ENCODE measurements at regions of chr13 and their contacts with region 1.

Region 1: GRCh38 chr13:46160471-46161066 is 21.4 kb downstream of the LCP1 start:
- DNase-seq: no peak
- ATAC-seq: peak; percentile 62
- H3K4me3 Mint-ChIP-seq: peak overlapping the region; percentile 58
- H3K27ac Mint-ChIP-seq: peak overlapping the region; percentile 89
- H3K4me1 Mint-ChIP-seq: peaks cover 55% of the 10 kb centered on the region
- H3K27me3 Mint-ChIP-seq: no peaks in the 10 kb centered on the region
- CTCF ChIP-seq: peak; percentile 88

Region 2: DNA sequence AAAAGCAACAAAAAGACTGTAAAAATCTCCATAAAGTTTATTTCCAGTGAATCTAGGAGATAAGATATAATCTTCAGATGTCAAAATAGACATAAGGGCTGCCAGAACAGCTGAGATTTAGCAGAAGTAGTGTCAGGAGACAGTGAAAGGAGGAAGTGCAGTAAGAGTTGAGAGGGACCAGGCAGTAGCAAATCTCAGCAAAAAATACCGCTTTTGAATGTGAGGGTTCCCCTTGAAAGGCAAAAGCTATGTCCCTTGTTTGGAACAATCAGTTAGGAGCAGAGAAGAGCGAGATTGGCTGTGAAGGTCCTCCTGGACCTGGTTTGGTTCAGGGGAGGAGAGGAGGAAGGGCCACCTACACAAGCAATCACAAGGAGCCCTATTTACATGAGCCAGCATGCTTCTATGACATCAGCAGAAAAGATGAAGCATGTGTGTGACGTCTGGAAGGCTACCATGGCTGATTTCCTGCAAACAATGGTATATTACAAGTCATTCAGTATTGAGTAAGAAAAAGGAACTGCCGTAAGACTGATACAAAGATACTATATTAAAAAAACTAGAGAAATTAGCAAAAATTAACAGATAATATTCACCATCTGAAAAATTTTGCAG is 210.1 kb before region 1 on chr13:
- CTCF ChIA-PET with region 1: no interaction called
- POLR2A ChIA-PET with region 1: no interaction called
- intact Hi-C with region 1: no loop called
- DNase-seq: no peak
- ATAC-seq: no peak
- H3K4me3 Mint-ChIP-seq: no peak overlapping the region
- H3K27ac Mint-ChIP-seq: no peak overlapping the region
- H3K4me1 Mint-ChIP-seq: no peaks in the 10 kb centered on the region
- H3K27me3 Mint-ChIP-seq: no peaks in the 10 kb centered on the region
- CTCF ChIP-seq: no peak

Region 3: DNA sequence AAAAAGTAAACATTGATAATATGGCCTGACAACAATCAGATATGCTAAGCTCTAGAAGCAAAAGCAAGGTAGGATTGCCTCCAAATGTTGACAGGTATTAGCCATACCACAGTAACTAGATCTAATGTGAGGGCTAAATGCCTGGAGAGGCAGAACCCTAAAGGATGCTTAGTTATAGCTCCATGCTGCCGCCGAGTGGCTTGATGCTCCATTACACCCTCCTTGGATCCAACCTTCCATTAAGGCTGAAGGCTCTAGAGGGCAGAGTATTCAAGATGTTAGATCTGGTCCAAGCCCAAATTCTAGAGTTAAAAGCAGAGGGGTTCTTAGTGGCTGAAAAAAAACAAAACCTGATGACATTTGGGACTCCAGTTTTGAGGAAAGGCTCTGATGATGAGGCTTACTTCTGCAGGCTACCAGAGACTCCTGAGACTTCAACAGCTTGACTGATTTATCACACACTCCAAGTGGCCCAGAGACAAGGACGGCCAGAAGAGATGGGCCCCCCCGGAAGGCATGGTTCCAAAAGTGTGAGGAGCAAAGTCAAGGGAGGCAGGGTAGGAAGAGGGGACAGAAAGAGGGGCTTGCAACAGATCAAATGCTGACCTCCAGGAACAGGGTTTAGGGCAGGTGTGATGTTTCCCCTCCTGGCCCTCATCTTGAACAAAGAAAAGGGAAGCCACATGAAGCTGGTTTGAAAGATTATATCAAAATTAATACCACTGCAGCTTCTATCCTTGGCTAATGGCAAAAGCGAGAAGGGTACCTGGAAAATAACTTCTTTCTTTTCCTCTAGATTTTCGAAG is 33.8 kb before region 1 on chr13:
- CTCF ChIA-PET with region 1: interaction called, 17 read pairs
- POLR2A ChIA-PET with region 1: interaction called, 3 read pairs
- intact Hi-C with region 1: no loop called
- DNase-seq: peak; percentile 87
- ATAC-seq: peak; percentile 92
- H3K4me3 Mint-ChIP-seq: no peak overlapping the region
- H3K27ac Mint-ChIP-seq: peak overlapping the region; percentile 61
- H3K4me1 Mint-ChIP-seq: peaks cover 35% of the 10 kb centered on the region
- H3K27me3 Mint-ChIP-seq: no peaks in the 10 kb centered on the region
- CTCF ChIP-seq: peak; percentile 86

Region 4: GRCh38 chr13:46149272-46150133 is 11.1 kb before region 1 on chr13:
- CTCF ChIA-PET with region 1: interaction called, 67 read pairs
- POLR2A ChIA-PET with region 1: interaction called, 18 read pairs
- intact Hi-C with region 1: no loop called
- DNase-seq: peak; percentile 66
- ATAC-seq: peak; percentile 84
- H3K4me3 Mint-ChIP-seq: no peak overlapping the region
- H3K27ac Mint-ChIP-seq: peak overlapping the region; percentile 80
- H3K4me1 Mint-ChIP-seq: peaks cover 53% of the 10 kb centered on the region
- H3K27me3 Mint-ChIP-seq: no peaks in the 10 kb centered on the region
- CTCF ChIP-seq: no peak

Region 5: GRCh38 chr13:46184277-46184699 is 23.7 kb after region 1 on chr13:
- CTCF ChIA-PET with region 1: interaction called, 20 read pairs
- POLR2A ChIA-PET with region 1: interaction called, 14 read pairs
- intact Hi-C with region 1: loop called (anchors 2 kb)
- DNase-seq: peak; percentile 91
- ATAC-seq: peak; percentile 59
- H3K4me3 Mint-ChIP-seq: peak overlapping the region; percentile 99
- H3K27ac Mint-ChIP-seq: peak overlapping the region; percentile 99
- H3K4me1 Mint-ChIP-seq: peaks cover 37% of the 10 kb centered on the region
- H3K27me3 Mint-ChIP-seq: peaks cover 3% of the 10 kb centered on the region
- CTCF ChIP-seq: peak; percentile 72

Region 6: GRCh38 chr13:46321494-46322225 is 161.1 kb after region 1 on chr13:
- CTCF ChIA-PET with region 1: interaction called, 29 read pairs
- POLR2A ChIA-PET with region 1: no interaction called
- intact Hi-C with region 1: loop called (anchors 5 kb)
- DNase-seq: peak; percentile 90
- ATAC-seq: peak; percentile 90
- H3K4me3 Mint-ChIP-seq: peak overlapping the region; percentile 85
- H3K27ac Mint-ChIP-seq: peak overlapping the region; percentile 97
- H3K4me1 Mint-ChIP-seq: peaks cover 29% of the 10 kb centered on the region
- H3K27me3 Mint-ChIP-seq: no peaks in the 10 kb centered on the region
- CTCF ChIP-seq: peak; percentile 93